B cell (primary cell): ENCODE measurements at regions of chr1 and their contacts with region 1.

Region 1: GRCh38 chr1:1033009-1033587 is 13.2 kb downstream of the AGRN start:
- DNase-seq: peak; percentile 98
- ATAC-seq: peak; percentile 93
- H3K4me3 ChIP-seq: peak overlapping the region in 4 of 5 experiments; percentile 20 to 50 (median 38)
- H3K4me3 Mint-ChIP-seq: peak overlapping the region; percentile 78
- H3K27ac ChIP-seq: no peak overlapping the region
- H3K27ac Mint-ChIP-seq: peak overlapping the region; percentile 56
- H3K4me1 ChIP-seq: peaks cover 29 to 30% of the 10 kb centered on the region in 2 donors
- H3K4me1 Mint-ChIP-seq: peaks cover 24% of the 10 kb centered on the region
- H3K27me3 ChIP-seq: peaks cover 0 to 32% (median 5%) of the 10 kb centered on the region in 4 experiments
- H3K27me3 Mint-ChIP-seq: peaks cover 11% of the 10 kb centered on the region
- CTCF ChIP-seq: peak; percentile 89

Region 2: DNA sequence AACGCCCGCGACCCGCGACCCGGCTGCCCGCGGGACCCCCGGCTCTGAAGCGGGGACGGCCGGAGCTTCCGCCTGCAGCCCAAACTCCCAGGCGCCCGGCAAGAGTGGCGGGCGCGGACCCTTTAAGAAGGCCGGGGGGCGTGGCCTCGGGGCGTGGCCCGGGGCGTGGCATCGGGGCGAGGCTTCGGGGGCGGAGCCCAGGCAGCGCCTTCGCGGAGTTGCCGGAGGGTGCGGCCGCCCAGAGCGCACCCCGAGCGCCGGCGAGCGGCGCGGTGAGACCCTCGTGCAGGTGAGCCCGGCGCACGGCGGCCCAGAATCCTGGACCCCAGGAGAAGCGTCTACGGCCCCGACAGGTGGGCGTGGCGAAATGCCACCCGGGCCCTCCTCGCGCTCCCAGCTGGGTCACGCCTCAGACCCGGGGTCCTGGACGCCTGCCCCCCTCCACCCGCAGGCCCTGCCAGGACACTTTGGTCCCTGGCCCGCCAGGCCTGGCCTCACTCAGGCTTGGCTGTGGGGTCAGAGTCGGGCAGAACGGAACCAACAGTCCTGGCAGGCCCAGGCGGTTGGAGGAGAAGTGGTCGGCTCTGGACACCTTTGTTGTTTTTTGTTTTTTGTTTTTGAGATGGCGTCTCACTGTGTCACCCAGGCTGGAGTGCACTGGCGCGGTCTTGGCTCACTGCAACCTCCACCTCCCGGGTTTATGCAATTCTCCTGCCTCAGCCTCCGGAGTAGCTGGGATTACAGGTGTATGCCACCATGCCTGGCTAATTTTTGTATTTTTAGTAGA is 26.6 kb after region 1 on chr1:
- CTCF ChIA-PET with region 1: interaction called, 29 read pairs
- POLR2A ChIA-PET with region 1: interaction called, 27 read pairs
- intact Hi-C with region 1: loop called (anchors 1 kb)
- DNase-seq: peak; percentile 92
- ATAC-seq: peak; percentile 65
- H3K4me3 ChIP-seq: peak overlapping the region in 4 of 5 experiments; percentile 40 to 60 (median 51)
- H3K4me3 Mint-ChIP-seq: peak overlapping the region; percentile 76
- H3K27ac ChIP-seq: no peak overlapping the region
- H3K27ac Mint-ChIP-seq: no peak overlapping the region
- H3K4me1 ChIP-seq: peaks cover 38 to 44% of the 10 kb centered on the region in 2 donors
- H3K4me1 Mint-ChIP-seq: peaks cover 22% of the 10 kb centered on the region
- H3K27me3 ChIP-seq: peaks cover 0 to 62% (median 30%) of the 10 kb centered on the region in 4 experiments
- H3K27me3 Mint-ChIP-seq: peaks cover 7% of the 10 kb centered on the region
- CTCF ChIP-seq: peak; percentile 9

Region 3: GRCh38 chr1:1137256-1138045 is 104.4 kb after region 1 on chr1:
- CTCF ChIA-PET with region 1: no interaction called
- POLR2A ChIA-PET with region 1: no interaction called
- intact Hi-C with region 1: loop called (anchors 1 kb)
- DNase-seq: peak; percentile 94
- ATAC-seq: peak; percentile 73
- H3K4me3 ChIP-seq: peak overlapping the region in 4 of 5 experiments; percentile 44 to 60 (median 54)
- H3K4me3 Mint-ChIP-seq: peak overlapping the region; percentile 82
- H3K27ac ChIP-seq: peak overlapping the region; percentile 92 to 94
- H3K27ac Mint-ChIP-seq: peak overlapping the region; percentile 92
- H3K4me1 ChIP-seq: peaks cover 32 to 56% of the 10 kb centered on the region in 2 donors
- H3K4me1 Mint-ChIP-seq: peaks cover 37% of the 10 kb centered on the region
- H3K27me3 ChIP-seq: no peaks in the 10 kb centered on the region
- H3K27me3 Mint-ChIP-seq: no peaks in the 10 kb centered on the region
- CTCF ChIP-seq: no peak

Region 4: GRCh38 chr1:1231400-1232223 is 198.5 kb after region 1 on chr1 and contains the start of gene SDF4:
- CTCF ChIA-PET with region 1: no interaction called
- POLR2A ChIA-PET with region 1: no interaction called
- intact Hi-C with region 1: loop called (anchors 10 kb)
- DNase-seq: peak; percentile 98
- ATAC-seq: peak; percentile 94
- H3K4me3 ChIP-seq: peak within 1 kb of the TSS; percentile 86 to 98 (median 90)
- H3K4me3 Mint-ChIP-seq: peak within 1 kb of the TSS; percentile 93
- H3K27ac ChIP-seq: peak within 1 kb of the TSS; percentile 29 to 91
- H3K27ac Mint-ChIP-seq: peak within 1 kb of the TSS; percentile 84
- H3K4me1 ChIP-seq: peaks cover 25 to 30% of the 10 kb centered on the region in 2 donors
- H3K4me1 Mint-ChIP-seq: peaks cover 33% of the 10 kb centered on the region
- H3K27me3 ChIP-seq: no peaks in the 10 kb centered on the region
- H3K27me3 Mint-ChIP-seq: no peaks in the 10 kb centered on the region
- CTCF ChIP-seq: no peak
- total RNA-seq, gene SDF4: 143 and 151 TPM in 2 replicates

Region 5: GRCh38 chr1:1291548-1292441 is 258.7 kb after region 1 on chr1:
- CTCF ChIA-PET with region 1: interaction called, 26 read pairs
- POLR2A ChIA-PET with region 1: no interaction called
- intact Hi-C with region 1: loop called (anchors 2 kb)
- DNase-seq: peak; percentile 87
- ATAC-seq: peak; percentile 84
- H3K4me3 ChIP-seq: no peak overlapping the region
- H3K4me3 Mint-ChIP-seq: no peak overlapping the region
- H3K27ac ChIP-seq: no peak overlapping the region
- H3K27ac Mint-ChIP-seq: peak overlapping the region; percentile 50
- H3K4me1 ChIP-seq: peaks cover 0 to 16% of the 10 kb centered on the region in 2 donors
- H3K4me1 Mint-ChIP-seq: peaks cover 11% of the 10 kb centered on the region
- H3K27me3 ChIP-seq: no peaks in the 10 kb centered on the region
- H3K27me3 Mint-ChIP-seq: no peaks in the 10 kb centered on the region
- CTCF ChIP-seq: peak; percentile 74

Region 6: GRCh38 chr1:1324521-1325287 is 291.6 kb after region 1 on chr1 and contains the starts of genes CPTP and INTS11:
- CTCF ChIA-PET with region 1: no interaction called
- POLR2A ChIA-PET with region 1: interaction called, 11 read pairs
- intact Hi-C with region 1: no loop called
- DNase-seq: peak; percentile 95
- ATAC-seq: peak; percentile 89
- H3K4me3 ChIP-seq: peak within 1 kb of the TSS; percentile 31 to 84 (median 74)
- H3K4me3 Mint-ChIP-seq: peak within 1 kb of the TSS; percentile 93
- H3K27ac ChIP-seq: peak within 1 kb of the TSS; percentile 10 to 75
- H3K27ac Mint-ChIP-seq: peak within 1 kb of the TSS; percentile 92
- H3K4me1 ChIP-seq: peaks cover 20 to 32% of the 10 kb centered on the region in 2 donors
- H3K4me1 Mint-ChIP-seq: peaks cover 29% of the 10 kb centered on the region
- H3K27me3 ChIP-seq: no peaks in the 10 kb centered on the region
- H3K27me3 Mint-ChIP-seq: no peaks in the 10 kb centered on the region
- CTCF ChIP-seq: no peak
- total RNA-seq, gene CPTP: 18.8 and 21.6 TPM in 2 replicates
- total RNA-seq, gene INTS11: 149 and 167 TPM in 2 replicates